Naive thymus-derived CD4-positive, alpha-beta T cell (primary cell): ENCODE measurements at regions of chr12 and their contacts with region 1.

Region 1: DNA sequence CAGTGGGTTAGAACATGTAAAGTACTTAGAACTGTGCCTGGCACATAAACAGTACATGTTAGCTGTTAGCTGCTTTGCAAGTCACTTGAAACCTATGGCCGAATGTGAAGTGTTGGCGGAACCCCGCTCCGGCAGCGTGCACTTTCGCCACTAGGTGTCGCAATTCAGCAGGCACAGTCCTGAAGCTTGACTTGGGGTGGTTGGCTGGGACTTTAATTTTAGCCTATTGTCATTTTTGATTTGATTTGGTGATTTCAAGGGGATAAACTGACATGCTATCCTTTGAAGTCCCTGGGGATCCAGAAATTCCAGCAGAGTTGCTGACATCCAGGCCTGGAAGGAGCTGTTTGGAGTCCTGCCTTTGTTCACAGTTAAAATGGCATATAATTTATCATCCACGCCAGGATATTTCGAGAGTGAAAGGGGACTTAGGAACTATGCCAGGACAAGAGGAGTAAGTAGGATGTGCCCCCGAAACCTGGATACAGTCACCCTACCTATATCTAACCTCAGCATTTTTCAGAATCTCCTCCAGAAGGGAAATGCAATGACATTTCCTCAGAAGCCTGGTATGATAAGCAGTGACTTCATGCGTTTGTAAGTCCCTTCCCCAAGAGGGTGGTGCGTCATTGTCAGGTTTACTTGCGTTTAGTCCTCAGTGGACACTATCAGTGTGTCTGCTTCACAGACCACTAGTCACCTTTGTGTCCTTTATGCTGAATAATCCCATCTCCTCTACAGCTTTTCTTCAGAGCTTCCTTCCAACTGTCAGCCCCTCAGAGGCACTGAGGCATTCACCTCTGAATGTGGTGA is 3.5 kb upstream of the TSPAN9 start:
- DNase-seq: peak; percentile 63 to 86 (median 76)
- ATAC-seq: peak; percentile 69
- H3K4me3 ChIP-seq: no peak overlapping the region
- H3K4me3 Mint-ChIP-seq: peak overlapping the region in 2 of 10 donors; percentile 27 to 51
- H3K27ac ChIP-seq: no peak overlapping the region
- H3K27ac Mint-ChIP-seq: peak overlapping the region in 1 of 9 donors; percentile 9
- H3K4me1 ChIP-seq: peaks cover 0 to 3% of the 10 kb centered on the region in 2 donors
- H3K4me1 Mint-ChIP-seq: peaks cover 0 to 21% (median 13%) of the 10 kb centered on the region in 7 donors
- H3K27me3 ChIP-seq: peaks cover 0 to 4% of the 10 kb centered on the region in 2 donors
- H3K27me3 Mint-ChIP-seq: peaks cover 0 to 32% (median 5%) of the 10 kb centered on the region in 5 donors

Region 2: GRCh38 chr12:2890388-2891239 is 183.0 kb before region 1 on chr12 and contains the start of gene TULP3:
- CTCF ChIA-PET with region 1: no interaction called
- POLR2A ChIA-PET with region 1: no interaction called
- intact Hi-C with region 1: loop called in 1 of 2 experiments (anchors 1 kb)
- DNase-seq: peak; percentile 95 to 98 (median 97)
- ATAC-seq: peak; percentile 99
- H3K4me3 ChIP-seq: peak within 1 kb of the TSS; percentile 96
- H3K4me3 Mint-ChIP-seq: peak within 1 kb of the TSS; percentile 93 to 100 (median 98)
- H3K27ac ChIP-seq: peak within 1 kb of the TSS; percentile 89
- H3K27ac Mint-ChIP-seq: peak within 1 kb of the TSS; percentile 81 to 97 (median 97)
- H3K4me1 ChIP-seq: peaks cover 3 to 8% of the 10 kb centered on the region in 2 donors
- H3K4me1 Mint-ChIP-seq: peaks cover 15 to 35% (median 31%) of the 10 kb centered on the region in 7 donors
- H3K27me3 ChIP-seq: no peaks in the 10 kb centered on the region
- H3K27me3 Mint-ChIP-seq: peaks cover 0 to 2% (median 0%) of the 10 kb centered on the region in 5 donors
- total RNA-seq, gene TULP3: 4.7 to 9.6 (median 7.4) TPM

Region 3: GRCh38 chr12:3135522-3136461 is 62.1 kb after region 1 on chr12:
- CTCF ChIA-PET with region 1: no interaction called
- POLR2A ChIA-PET with region 1: no interaction called
- intact Hi-C with region 1: loop called in 1 of 2 experiments (anchors 2 kb)
- DNase-seq: peak in 8 of 9 donors; percentile 18 to 55 (median 38)
- ATAC-seq: peak; percentile 69
- H3K4me3 ChIP-seq: no peak overlapping the region
- H3K4me3 Mint-ChIP-seq: no peak overlapping the region
- H3K27ac ChIP-seq: no peak overlapping the region
- H3K27ac Mint-ChIP-seq: no peak overlapping the region
- H3K4me1 ChIP-seq: no peaks in the 10 kb centered on the region
- H3K4me1 Mint-ChIP-seq: peaks cover 2 to 7% (median 3%) of the 10 kb centered on the region in 7 donors
- H3K27me3 ChIP-seq: peaks cover 0 to 9% of the 10 kb centered on the region in 2 donors
- H3K27me3 Mint-ChIP-seq: peaks cover 22 to 56% (median 46%) of the 10 kb centered on the region in 5 donors

Region 4: DNA sequence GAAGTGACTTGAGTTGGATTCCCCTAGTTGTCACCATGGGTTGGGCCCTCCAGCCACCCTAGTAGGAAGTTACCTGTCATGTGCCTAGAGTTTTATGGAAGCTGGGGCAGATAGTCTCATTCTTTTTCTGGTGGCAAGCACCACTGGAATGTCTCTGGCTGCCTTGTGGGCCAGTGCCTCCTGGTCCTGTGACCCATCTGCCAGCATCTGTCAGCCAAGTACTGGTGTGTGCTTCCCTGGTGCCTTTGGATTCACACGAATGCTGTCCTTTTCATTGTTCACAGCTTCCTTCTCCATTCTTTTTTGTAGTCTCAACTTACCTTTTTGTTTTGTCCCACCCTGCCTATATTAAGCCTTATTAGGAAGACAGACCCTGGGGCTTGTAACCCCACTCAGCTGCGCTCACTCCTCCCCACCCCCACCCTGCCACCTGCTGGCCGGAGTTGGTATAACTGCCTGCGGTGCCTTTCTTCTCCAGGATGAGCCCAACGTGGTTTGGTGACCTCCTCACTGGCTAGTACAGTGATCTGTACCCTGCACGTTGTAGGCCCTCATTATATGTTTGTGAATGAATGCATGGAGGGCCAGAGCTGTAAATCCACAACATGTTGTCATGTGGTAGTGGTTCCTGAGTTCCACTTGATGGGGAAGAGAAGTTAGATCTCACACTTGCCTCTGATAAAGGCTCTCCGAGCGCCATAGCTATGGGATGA is 129.2 kb after region 1 on chr12:
- CTCF ChIA-PET with region 1: no interaction called
- POLR2A ChIA-PET with region 1: no interaction called
- intact Hi-C with region 1: loop called (anchors 1 kb)
- DNase-seq: peak in 8 of 9 donors; percentile 17 to 62 (median 31)
- ATAC-seq: peak; percentile 64
- H3K4me3 ChIP-seq: no peak overlapping the region
- H3K4me3 Mint-ChIP-seq: peak overlapping the region in 1 of 10 donors; percentile 1
- H3K27ac ChIP-seq: no peak overlapping the region
- H3K27ac Mint-ChIP-seq: no peak overlapping the region
- H3K4me1 ChIP-seq: no peaks in the 10 kb centered on the region
- H3K4me1 Mint-ChIP-seq: peaks cover 0 to 10% (median 8%) of the 10 kb centered on the region in 7 donors
- H3K27me3 ChIP-seq: peaks cover 0 to 3% of the 10 kb centered on the region in 2 donors
- H3K27me3 Mint-ChIP-seq: peaks cover 29 to 41% (median 33%) of the 10 kb centered on the region in 5 donors

Region 5: DNA sequence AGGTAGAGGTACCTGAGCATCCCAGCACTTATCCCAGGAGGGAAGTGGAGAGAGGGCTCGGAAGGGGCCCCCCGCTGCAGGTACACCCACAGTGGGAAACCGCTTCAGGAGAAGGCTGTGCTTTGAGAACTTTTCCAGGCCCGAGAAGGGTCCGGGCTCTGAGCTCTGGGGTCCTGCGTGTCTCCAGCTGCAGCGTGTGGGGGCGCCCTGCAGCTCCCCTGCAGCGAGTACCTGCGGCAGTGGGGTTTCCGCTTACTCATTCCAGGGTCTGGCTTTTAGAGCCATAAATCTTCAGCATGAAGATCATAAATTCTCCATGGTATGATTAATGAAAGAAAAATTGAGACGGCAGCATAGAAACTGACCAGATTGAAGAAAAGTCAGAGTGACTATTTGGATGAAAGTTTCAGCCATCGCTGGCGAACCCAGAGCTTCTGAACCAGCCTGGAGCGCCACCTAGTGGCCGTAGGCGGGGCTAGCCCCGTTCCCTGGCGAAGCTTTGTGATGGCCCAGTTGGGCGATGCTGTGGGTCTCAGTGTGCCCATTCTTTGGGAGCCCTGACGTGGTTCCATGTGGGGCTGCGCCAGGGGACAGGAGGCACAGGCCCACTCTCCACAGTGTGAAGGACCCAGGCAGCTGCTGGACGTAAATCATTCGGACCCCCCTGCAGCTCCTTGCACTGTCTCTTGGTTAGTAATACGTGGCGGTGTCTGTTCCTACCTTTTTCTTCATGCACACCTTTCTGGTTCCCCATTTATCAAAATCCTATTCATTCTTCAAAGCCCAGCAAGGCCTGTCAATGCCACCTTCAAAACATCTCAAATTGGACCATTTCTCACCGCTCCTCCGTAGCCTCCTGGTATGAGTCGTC is 201.8 kb after region 1 on chr12:
- CTCF ChIA-PET with region 1: interaction called, 31 read pairs
- POLR2A ChIA-PET with region 1: no interaction called
- intact Hi-C with region 1: loop called (anchors 1 kb)
- DNase-seq: peak; percentile 24 to 75 (median 62)
- ATAC-seq: peak; percentile 74
- H3K4me3 ChIP-seq: no peak overlapping the region
- H3K4me3 Mint-ChIP-seq: peak overlapping the region in 3 of 10 donors; percentile 19 to 34 (median 32)
- H3K27ac ChIP-seq: no peak overlapping the region
- H3K27ac Mint-ChIP-seq: no peak overlapping the region
- H3K4me1 ChIP-seq: no peaks in the 10 kb centered on the region
- H3K4me1 Mint-ChIP-seq: no peaks in the 10 kb centered on the region
- H3K27me3 ChIP-seq: no peaks in the 10 kb centered on the region
- H3K27me3 Mint-ChIP-seq: peaks cover 5 to 30% (median 11%) of the 10 kb centered on the region in 5 donors

Region 6: DNA sequence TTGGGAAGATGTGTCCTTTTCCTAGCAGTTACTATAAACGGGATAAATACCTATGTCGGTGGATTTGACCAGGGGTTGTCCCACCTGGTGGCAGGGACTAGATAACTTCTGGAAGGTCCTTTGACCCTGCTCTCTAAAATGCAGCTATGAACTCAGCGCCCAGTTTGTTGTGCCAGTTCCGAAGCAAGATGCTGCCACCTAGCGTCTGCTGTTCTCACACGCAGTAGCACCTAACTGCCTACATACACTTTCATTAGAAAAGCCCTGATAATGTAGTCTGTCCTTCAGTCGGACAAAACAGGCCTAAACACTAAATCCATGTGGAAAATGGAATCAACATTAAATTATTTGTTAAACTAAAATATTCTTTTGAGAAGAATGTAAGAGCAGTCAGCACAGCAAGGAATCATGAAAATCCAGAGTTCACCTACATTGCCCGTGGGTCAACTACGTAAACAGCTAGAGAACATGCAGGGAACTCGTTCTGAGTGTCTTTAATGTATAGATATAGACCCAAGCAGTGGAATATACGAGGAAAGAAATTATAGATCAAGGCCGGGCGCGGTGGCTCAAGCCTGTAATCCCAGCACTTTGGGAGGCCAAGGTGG is 730.3 kb after region 1 on chr12:
- CTCF ChIA-PET with region 1: no interaction called
- POLR2A ChIA-PET with region 1: no interaction called
- intact Hi-C with region 1: loop called in 1 of 2 experiments (anchors 10 kb)
- DNase-seq: peak; percentile 27 to 63 (median 55)
- ATAC-seq: peak; percentile 82
- H3K4me3 ChIP-seq: no peak overlapping the region
- H3K4me3 Mint-ChIP-seq: no peak overlapping the region
- H3K27ac ChIP-seq: no peak overlapping the region
- H3K27ac Mint-ChIP-seq: no peak overlapping the region
- H3K4me1 ChIP-seq: no peaks in the 10 kb centered on the region
- H3K4me1 Mint-ChIP-seq: peaks cover 0 to 9% (median 0%) of the 10 kb centered on the region in 7 donors
- H3K27me3 ChIP-seq: no peaks in the 10 kb centered on the region
- H3K27me3 Mint-ChIP-seq: no peaks in the 10 kb centered on the region

Region 7: GRCh38 chr12:4320853-4321701 is 1247.4 kb after region 1 on chr12 and contains the start of gene TIGAR:
- CTCF ChIA-PET with region 1: no interaction called
- POLR2A ChIA-PET with region 1: no interaction called
- intact Hi-C with region 1: loop called in 1 of 2 experiments (anchors 5 kb)
- DNase-seq: peak; percentile 86 to 97 (median 90)
- ATAC-seq: peak; percentile 99
- H3K4me3 ChIP-seq: peak within 1 kb of the TSS; percentile 85
- H3K4me3 Mint-ChIP-seq: peak within 1 kb of the TSS; percentile 83 to 97 (median 95)
- H3K27ac ChIP-seq: peak within 1 kb of the TSS; percentile 84
- H3K27ac Mint-ChIP-seq: peak within 1 kb of the TSS; percentile 74 to 96 (median 92)
- H3K4me1 ChIP-seq: peaks cover 14 to 15% of the 10 kb centered on the region in 2 donors
- H3K4me1 Mint-ChIP-seq: peaks cover 21 to 53% (median 46%) of the 10 kb centered on the region in 7 donors
- H3K27me3 ChIP-seq: no peaks in the 10 kb centered on the region
- H3K27me3 Mint-ChIP-seq: no peaks in the 10 kb centered on the region
- total RNA-seq, gene TIGAR: 7.1 to 15.8 (median 11.1) TPM